Activated naive CD8-positive, alpha-beta T cell treated with anti-CD3 and anti-CD28 coated beads, Interleukin-2, amount 10 ng/mL, durations not matched to agents 7 days and 5 days (primary cell): ENCODE measurements at regions of chr15 and their contacts with region 1.

Region 1: GRCh38 chr15:31435261-31435911 is 108.8 kb downstream of the KLF13 start:
- DNase-seq: peak; percentile 77
- ATAC-seq: peak; percentile 72
- H3K4me3 Mint-ChIP-seq: peak overlapping the region; percentile 66
- H3K27ac Mint-ChIP-seq: peak overlapping the region; percentile 91
- H3K4me1 Mint-ChIP-seq: peaks cover 67% of the 10 kb centered on the region
- H3K27me3 Mint-ChIP-seq: no peaks in the 10 kb centered on the region

Region 2: GRCh38 chr15:31326156-31326732 is 109.1 kb before region 1 on chr15:
- POLR2A ChIA-PET with region 1: interaction called, 31 read pairs
- DNase-seq: peak; percentile 100
- ATAC-seq: peak; percentile 77
- H3K4me3 Mint-ChIP-seq: peak overlapping the region; percentile 94
- H3K27ac Mint-ChIP-seq: peak overlapping the region; percentile 72
- H3K4me1 Mint-ChIP-seq: peaks cover 43% of the 10 kb centered on the region
- H3K27me3 Mint-ChIP-seq: no peaks in the 10 kb centered on the region

Region 3: DNA sequence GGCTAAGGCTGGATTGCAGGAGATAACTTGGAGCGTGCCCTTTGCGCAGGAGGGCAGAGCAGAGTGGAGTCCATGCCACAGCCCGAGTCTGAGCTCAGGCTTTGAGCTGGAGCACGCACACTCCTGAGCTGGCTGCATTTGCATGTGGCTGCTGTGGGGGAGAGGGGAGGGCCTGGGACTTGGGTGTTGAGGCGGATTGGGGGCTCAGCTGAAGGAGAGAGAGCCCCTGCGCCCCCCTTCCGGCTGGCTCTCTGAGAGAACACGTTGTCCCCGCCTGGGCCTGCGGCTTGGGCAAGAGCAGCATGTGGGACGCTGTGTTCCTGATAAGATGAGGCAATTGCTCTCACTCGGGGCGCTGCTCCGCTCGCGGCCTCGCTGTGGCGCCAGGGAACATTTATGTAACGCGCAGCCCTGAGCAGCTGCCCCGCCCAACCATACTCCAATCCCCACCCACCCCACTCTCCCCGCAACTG is 69.7 kb before region 1 on chr15:
- POLR2A ChIA-PET with region 1: interaction called, 227 read pairs
- DNase-seq: peak; percentile 84
- ATAC-seq: peak; percentile 57
- H3K4me3 Mint-ChIP-seq: peak overlapping the region; percentile 84
- H3K27ac Mint-ChIP-seq: peak overlapping the region; percentile 100
- H3K4me1 Mint-ChIP-seq: peaks cover 93% of the 10 kb centered on the region
- H3K27me3 Mint-ChIP-seq: no peaks in the 10 kb centered on the region

Region 4: DNA sequence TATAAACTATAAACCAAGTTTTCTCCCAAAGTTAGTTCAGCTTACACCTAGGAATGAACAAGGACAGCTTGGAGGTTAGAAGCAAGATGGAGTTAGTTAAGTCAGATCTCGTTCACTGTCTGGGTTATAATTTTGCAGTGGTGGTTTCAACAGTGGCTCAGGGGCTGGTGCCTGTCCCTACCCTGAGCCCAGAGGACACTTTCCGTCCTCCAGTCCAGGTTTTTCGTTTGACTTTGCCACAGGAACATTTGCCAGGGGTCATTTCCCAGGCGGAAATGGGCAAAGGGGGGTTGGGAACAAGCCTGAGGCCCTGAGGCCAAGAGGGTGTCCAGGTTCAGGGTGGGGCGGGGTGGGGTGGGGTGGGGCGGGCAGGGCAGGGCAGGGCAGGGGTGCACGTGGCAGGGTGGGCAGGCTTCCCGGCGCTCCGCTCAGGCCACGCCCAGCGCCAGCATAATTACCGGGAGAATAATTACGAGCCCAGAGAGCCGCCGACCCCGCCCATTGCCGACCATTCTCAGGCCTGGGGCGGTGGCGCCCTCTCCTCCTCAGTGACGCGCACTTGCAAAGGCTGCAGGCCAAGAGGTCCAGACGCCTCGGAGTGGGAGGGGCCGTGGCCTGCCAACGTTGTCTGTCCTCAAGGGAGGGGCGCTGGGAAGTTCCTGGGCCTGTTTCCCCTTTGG is 38.4 kb before region 1 on chr15:
- POLR2A ChIA-PET with region 1: interaction called, 76 read pairs
- DNase-seq: no peak
- ATAC-seq: no peak
- H3K4me3 Mint-ChIP-seq: no peak overlapping the region
- H3K27ac Mint-ChIP-seq: no peak overlapping the region
- H3K4me1 Mint-ChIP-seq: peaks cover 27% of the 10 kb centered on the region
- H3K27me3 Mint-ChIP-seq: no peaks in the 10 kb centered on the region

Region 5: DNA sequence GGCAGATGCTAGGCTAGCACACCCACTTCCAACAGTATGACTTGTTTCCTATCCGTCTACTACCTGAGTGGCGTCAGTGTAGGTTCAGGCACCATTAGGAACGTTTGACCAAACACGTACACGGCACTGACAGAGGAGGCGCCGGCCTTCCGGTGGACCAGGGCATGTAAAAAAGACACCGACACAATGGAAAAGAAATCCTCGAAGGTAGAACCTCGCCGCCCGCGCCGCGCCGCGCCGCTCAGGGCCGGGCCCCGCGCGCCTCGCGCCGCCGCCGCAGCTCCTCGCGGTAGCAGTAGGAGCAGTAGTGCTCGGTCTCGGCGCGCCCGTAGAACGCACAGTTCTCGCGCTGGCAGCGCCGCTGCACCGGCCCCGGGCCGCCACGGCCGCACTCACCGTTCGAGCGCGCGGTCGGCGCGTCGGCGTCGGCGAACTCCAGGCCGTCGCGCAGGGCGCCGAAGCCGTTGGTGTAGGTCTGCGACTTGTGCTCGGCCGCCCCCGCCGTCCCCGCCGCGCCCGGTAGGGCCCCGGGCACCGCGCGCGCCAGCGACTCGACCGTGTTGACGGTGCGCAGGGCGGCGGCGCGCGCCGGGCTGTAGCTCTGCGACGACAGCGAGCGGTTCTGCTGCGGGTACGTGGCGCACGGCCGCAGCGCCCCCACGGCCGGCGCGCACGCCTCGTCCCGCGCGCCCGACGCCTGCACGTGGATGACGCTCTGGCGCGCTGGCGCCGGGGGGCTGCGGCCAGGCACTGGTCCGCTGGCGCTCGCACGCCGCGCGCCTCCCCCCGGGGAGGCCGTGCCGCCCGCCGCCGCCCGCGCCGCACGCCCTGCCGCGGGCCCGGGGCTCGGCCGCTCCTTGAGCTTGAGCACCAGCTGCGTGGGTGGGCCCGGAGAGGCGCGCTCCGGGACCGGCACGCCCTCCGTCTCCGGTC is 47.9 kb after region 1 on chr15:
- POLR2A ChIA-PET with region 1: interaction called, 48 read pairs
- DNase-seq: peak; percentile 73
- ATAC-seq: peak; percentile 56
- H3K4me3 Mint-ChIP-seq: peak overlapping the region; percentile 97
- H3K27ac Mint-ChIP-seq: peak overlapping the region; percentile 95
- H3K4me1 Mint-ChIP-seq: peaks cover 48% of the 10 kb centered on the region
- H3K27me3 Mint-ChIP-seq: no peaks in the 10 kb centered on the region